PC-3 (cell line): ENCODE measurements at regions of chr12 and their contacts with region 1.

Region 1: GRCh38 chr12:12334367-12335040 is 15.5 kb downstream of the MANSC1 start:
- DNase-seq: peak; percentile 56
- ATAC-seq: peak; percentile 38
- H3K4me3 ChIP-seq: no peak overlapping the region
- H3K27ac ChIP-seq: peak overlapping the region; percentile 85
- H3K4me1 ChIP-seq: peaks cover 51% of the 10 kb centered on the region
- H3K27me3 ChIP-seq: no peaks in the 10 kb centered on the region
- CTCF ChIP-seq: peak; percentile 84

Region 2: GRCh38 chr12:12069821-12070548 is 264.5 kb before region 1 on chr12:
- CTCF ChIA-PET with region 1: no interaction called
- POLR2A ChIA-PET with region 1: interaction called, 10 read pairs
- intact Hi-C with region 1: no loop called
- DNase-seq: no peak
- ATAC-seq: no peak
- H3K4me3 ChIP-seq: no peak overlapping the region
- H3K27ac ChIP-seq: no peak overlapping the region
- H3K4me1 ChIP-seq: peaks cover 6% of the 10 kb centered on the region; the same call in 1 of the 2 replicates
- H3K27me3 ChIP-seq: no peaks in the 10 kb centered on the region
- CTCF ChIP-seq: no peak

Region 3: DNA sequence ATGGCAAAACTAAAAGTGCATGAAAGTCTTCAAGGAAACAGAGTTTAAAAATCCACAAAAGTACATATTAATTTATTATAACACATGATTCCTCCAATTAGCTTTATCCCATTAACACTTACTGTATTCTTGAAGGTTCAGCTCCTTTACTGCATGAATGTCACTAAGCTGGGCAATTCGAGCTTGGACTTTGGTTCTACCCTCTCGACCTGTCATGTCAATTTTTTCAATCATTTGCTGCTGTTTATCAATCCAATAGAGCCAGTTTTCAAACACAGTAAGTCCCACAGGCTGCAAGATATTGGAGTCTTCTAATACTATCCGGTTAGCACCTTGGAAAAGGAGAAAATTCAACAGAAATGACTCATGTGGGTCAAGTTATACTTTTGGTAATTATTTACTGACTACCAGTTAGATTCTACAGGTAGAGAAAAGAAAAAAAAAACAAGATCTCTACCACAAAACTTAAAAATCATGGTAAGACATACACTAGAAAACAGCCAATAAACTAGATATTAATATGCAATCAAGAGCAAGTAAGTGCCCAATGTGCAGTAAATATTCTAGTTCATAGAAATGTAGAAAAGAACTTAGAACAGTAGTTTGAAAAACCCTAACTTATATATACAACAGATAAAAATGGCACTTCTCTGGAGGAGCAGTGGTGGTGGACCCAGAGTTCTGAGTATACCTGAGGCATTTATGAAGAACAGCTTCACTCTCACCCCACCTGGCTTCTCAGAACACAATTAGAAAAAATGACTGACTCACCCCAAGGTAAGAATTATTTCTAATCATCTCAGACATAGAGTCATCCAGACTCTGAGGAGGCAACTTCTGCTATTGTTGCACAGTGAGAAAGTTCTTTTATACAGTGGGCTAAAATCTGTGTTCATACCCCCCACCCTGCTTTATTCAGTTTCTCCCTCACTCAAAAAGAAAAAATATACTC is 196.0 kb before region 1 on chr12:
- CTCF ChIA-PET with region 1: no interaction called
- POLR2A ChIA-PET with region 1: interaction called, 10 read pairs
- intact Hi-C with region 1: no loop called
- DNase-seq: no peak
- ATAC-seq: no peak
- H3K4me3 ChIP-seq: no peak overlapping the region
- H3K27ac ChIP-seq: no peak overlapping the region
- H3K4me1 ChIP-seq: no peaks in the 10 kb centered on the region
- H3K27me3 ChIP-seq: no peaks in the 10 kb centered on the region
- CTCF ChIP-seq: no peak

Region 4: DNA sequence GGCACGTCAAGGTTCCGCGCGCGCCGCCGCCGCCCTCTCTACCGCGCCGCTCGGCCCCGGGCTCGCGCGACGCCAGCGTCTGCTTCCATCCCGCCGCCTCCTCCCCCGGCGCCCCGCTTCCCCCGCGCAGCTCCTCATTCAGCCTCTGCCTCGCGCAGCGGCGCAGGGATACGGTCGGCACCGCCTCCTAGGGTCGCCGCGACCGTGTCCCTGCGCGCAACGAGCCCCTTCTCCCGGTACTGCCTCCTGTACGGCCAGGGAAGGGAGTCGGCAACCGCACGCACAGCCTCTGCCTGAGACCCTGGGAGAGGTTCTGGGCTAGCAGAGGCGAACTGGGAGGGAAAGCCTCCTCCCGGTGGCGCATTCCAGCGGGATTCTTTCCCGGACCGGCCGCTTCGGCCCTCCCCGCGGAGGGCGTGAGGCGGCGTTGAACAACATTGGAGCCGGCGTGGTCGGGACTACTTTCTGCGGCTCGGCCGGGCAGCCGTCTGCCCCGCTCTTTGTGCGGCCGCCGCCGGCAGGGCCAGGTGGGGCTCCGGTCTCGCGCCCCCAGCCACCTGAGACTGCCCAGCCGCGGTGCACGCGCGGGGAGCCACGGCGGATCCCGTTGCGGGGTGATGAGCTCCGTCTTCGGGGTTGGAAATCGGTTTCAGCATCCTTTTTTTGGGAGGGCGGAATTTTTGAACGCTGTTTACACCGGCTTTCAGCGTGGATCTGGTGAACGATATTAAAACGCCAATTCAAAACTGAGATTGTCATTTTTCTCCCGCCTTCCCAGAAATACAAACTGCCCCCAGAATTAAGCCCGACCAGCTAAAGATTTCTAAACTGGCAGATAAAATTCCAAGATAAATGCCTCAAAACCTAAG is 67.4 kb before region 1 on chr12 and contains the start of gene LRP6:
- CTCF ChIA-PET with region 1: no interaction called
- POLR2A ChIA-PET with region 1: no interaction called
- intact Hi-C with region 1: loop called (anchors 5 kb)
- DNase-seq: peak; percentile 81
- ATAC-seq: peak; percentile 83
- H3K4me3 ChIP-seq: peak within 1 kb of the TSS; percentile 74
- H3K27ac ChIP-seq: peak within 1 kb of the TSS; percentile 79
- H3K4me1 ChIP-seq: peaks cover 16% of the 10 kb centered on the region
- H3K27me3 ChIP-seq: no peaks in the 10 kb centered on the region
- CTCF ChIP-seq: no peak
- total RNA-seq, gene LRP6: 15.5 and 17.3 TPM in 2 replicates

Region 5: GRCh38 chr12:12305568-12306300 is 28.8 kb before region 1 on chr12:
- CTCF ChIA-PET with region 1: no interaction called
- POLR2A ChIA-PET with region 1: no interaction called
- intact Hi-C with region 1: no loop called
- DNase-seq: no peak
- ATAC-seq: no peak
- H3K4me3 ChIP-seq: no peak overlapping the region
- H3K27ac ChIP-seq: no peak overlapping the region
- H3K4me1 ChIP-seq: no peaks in the 10 kb centered on the region
- H3K27me3 ChIP-seq: no peaks in the 10 kb centered on the region
- CTCF ChIP-seq: no peak

Region 6: DNA sequence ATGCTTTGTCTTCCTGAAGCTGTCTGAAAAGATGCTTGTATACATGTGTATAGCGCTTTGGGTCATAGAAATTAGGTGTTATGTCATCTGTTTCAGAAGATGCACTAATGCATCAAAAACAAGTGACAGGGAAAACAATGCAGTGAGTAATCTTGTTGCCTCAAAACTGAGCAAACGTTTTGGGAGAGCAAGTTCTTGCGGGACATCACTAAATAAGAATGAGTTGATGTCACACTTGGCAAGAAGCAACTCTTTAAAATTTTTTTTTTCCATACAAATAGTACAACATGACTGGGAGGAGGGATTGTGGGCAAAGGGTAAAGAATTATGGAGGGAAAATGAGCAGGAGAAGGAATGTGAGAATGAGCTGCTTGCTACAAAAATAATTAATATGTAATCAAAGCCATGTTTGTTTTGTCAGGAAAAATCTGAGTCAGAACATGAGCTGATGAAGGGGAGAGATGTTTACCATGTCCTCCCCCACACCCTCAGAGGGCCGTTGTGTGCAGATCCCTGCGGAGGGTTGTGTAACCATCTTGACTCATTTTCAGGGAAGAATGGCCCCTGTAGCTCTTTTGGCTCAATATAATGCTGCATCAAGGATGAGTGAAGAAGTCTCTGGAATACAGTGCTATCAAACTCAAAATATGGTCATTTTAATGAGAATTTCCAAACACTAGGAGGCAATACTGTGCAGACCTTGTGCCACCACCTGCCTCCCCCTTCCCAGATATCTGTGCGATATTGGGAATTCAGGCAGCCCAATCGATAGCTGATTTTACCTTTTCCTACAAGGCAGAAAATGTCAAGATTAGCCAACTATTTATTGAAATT is 63.7 kb after region 1 on chr12:
- CTCF ChIA-PET with region 1: interaction called, 11 read pairs
- POLR2A ChIA-PET with region 1: no interaction called
- intact Hi-C with region 1: no loop called
- DNase-seq: peak; percentile 92
- ATAC-seq: peak; percentile 98
- H3K4me3 ChIP-seq: no peak overlapping the region
- H3K27ac ChIP-seq: peak overlapping the region; percentile 81
- H3K4me1 ChIP-seq: peaks cover 22% of the 10 kb centered on the region
- H3K27me3 ChIP-seq: no peaks in the 10 kb centered on the region
- CTCF ChIP-seq: peak; percentile 45